ENCODE measurements at regions of chr14 and their contacts with region 1.

Region 1: DNA sequence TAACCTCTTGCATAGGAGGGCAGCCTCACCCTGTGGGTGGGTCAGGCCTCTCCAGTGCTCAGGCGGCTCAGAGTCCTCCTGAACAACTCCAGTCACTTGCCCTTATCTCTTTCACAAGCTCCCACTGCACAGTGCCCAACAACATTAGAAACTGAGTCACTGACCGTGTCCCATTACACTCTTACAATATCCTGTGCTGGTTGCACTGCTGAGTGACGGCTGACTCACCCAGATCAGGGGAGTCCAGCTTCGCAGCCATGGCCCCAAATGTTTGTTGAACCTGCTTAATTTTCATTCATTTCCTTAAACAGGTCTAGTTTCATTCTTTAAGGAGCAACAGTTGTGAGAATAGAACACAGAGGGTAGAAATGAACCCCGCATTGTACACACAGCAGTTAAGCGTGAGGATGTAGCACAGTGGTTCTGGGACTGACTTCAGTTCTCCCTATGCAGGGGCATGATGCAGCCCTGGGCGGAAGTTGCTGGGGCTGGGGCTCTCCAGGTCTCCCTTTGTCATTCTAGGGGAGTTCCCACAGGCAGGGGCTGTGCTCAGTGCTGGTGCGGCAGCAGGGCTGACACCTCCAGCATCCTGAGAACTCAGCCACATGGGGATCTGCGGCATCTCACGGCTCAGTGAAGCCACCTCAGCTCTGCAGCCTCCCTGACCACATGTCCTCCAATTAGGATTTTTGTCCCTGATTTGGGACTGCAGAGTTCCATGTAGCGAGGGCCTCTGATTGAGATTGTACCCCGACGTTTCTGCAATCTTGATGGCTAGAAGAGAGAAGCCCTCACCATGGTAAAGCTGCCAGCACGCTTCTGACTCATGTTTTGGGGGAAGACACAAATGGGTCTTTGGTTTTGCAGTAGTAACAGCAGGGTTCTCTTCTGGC is 16.1 kb downstream of the GPR68 start:
- DNase-seq: peak; percentile 78
- ATAC-seq: peak; percentile 83
- H3K4me3 Mint-ChIP-seq: peak overlapping the region; percentile 80
- H3K27ac Mint-ChIP-seq: peak overlapping the region; percentile 97
- H3K4me1 Mint-ChIP-seq: peaks cover 82% of the 10 kb centered on the region
- H3K27me3 Mint-ChIP-seq: no peaks in the 10 kb centered on the region

Region 2: DNA sequence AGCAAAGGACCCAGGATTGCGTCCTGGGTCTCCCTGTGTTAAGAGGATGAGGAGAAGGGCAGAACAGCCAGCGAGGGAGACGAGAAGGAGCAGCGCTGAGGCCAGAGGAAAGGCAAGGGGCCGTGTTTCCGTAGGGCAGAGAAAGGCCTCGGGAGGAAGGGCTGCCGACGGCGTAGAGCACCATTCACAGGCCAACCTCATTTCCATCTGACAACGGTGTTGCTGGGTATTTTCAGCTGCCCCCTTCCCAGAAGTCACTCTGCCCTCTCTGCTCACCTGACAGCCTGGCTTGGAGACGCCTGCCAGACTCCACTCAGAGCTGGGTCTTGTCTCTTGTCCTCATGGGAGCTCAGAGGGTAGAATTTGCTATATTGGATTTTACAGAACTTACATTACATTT is 35.3 kb before region 1 on chr14:
- POLR2A ChIA-PET with region 1: interaction called, 24 read pairs
- DNase-seq: no peak
- ATAC-seq: no peak
- H3K4me3 Mint-ChIP-seq: no peak overlapping the region
- H3K27ac Mint-ChIP-seq: no peak overlapping the region
- H3K4me1 Mint-ChIP-seq: peaks cover 36% of the 10 kb centered on the region
- H3K27me3 Mint-ChIP-seq: no peaks in the 10 kb centered on the region

Region 3: GRCh38 chr14:91202234-91202974 is 26.0 kb before region 1 on chr14:
- POLR2A ChIA-PET with region 1: interaction called, 13 read pairs
- DNase-seq: peak; percentile 75
- ATAC-seq: peak; percentile 20
- H3K4me3 Mint-ChIP-seq: peak overlapping the region; percentile 56
- H3K27ac Mint-ChIP-seq: peak overlapping the region; percentile 78
- H3K4me1 Mint-ChIP-seq: peaks cover 47% of the 10 kb centered on the region
- H3K27me3 Mint-ChIP-seq: no peaks in the 10 kb centered on the region

Region 4: DNA sequence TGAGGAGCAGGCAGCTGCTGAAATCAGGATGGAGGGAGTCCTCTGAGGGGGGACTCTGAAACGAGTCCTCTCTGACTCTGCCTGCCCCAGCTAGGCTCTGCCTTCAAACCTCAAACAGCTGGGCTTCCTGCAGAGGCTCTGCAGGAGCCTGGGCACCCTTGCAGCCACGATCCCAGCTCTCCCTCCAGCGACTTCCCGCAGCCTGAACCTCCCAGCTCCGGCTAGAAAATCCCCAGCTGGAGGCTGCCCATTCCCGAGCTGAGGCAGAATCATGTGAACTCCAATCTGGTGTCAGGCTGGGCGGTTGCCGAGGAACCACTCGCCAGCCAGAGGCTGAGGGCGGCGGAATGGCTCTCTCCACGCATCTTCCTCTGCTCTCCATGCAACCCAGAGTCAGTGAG is 16.1 kb after region 1 on chr14 and contains the start of gene GPR68:
- POLR2A ChIA-PET with region 1: interaction called, 220 read pairs
- DNase-seq: peak; percentile 64
- ATAC-seq: peak; percentile 13
- H3K4me3 Mint-ChIP-seq: peak within 1 kb of the TSS; percentile 88
- H3K27ac Mint-ChIP-seq: peak within 1 kb of the TSS; percentile 90
- H3K4me1 Mint-ChIP-seq: peaks cover 78% of the 10 kb centered on the region
- H3K27me3 Mint-ChIP-seq: no peaks in the 10 kb centered on the region
- total RNA-seq, gene GPR68: 23.0 to 28.0 TPM

Region 5: GRCh38 chr14:91249841-91250616 is 21.7 kb after region 1 on chr14:
- POLR2A ChIA-PET with region 1: interaction called, 220 read pairs
- DNase-seq: peak; percentile 78
- ATAC-seq: peak; percentile 34
- H3K4me3 Mint-ChIP-seq: peak overlapping the region; percentile 78
- H3K27ac Mint-ChIP-seq: peak overlapping the region; percentile 97
- H3K4me1 Mint-ChIP-seq: peaks cover 72% of the 10 kb centered on the region
- H3K27me3 Mint-ChIP-seq: no peaks in the 10 kb centered on the region

Region 6: DNA sequence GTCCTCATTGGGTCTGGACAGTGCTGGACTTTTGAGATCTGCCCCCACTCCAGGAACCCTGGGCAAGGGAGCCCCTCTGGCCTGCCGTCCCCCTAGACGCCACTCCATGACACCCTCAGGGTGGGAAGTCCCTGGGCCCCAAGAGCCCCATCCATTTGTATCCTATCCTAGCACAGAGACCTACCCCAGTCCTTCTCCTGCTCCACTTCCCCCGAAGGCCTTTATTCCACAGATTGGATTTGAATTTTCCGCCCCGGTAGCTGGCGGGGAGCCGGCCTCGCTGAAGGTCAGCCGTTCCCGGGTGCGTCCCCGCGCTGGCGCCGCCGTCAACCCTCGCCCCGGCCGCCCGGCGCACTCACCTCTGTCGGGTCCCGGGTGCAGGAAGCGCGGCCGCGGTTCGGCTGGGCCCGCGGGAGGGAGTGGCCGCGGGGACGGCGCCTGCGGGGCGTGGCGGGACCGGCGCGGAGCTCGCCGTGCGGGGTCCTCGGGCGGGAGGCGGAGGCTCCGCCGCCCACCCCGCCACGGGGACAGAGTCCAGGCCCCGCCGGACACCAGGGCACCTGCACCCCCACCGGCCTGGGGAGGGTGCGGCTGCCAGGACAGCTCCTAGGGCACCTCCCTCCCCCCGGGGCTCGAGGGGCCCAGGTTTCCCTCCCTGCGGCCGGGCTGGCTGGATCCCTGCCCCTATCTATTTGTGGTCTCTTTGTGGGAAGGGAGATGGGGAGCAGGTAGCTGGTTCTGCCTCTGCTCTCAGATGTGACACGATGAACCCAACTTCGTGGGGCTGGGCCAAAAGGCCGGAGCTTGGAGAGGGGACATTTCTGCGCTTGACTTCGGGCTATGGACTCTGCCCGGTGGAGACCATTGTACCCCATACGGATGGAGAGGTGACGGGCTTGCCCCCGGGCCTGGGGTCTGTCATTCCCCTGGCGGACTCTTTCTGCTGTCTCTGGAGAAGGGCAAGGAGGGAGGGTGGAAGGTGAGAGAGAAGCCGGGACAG is 36.1 kb after region 1 on chr14:
- POLR2A ChIA-PET with region 1: interaction called, 29 read pairs
- DNase-seq: peak; percentile 74
- ATAC-seq: peak; percentile 59
- H3K4me3 Mint-ChIP-seq: peak overlapping the region; percentile 80
- H3K27ac Mint-ChIP-seq: peak overlapping the region; percentile 70
- H3K4me1 Mint-ChIP-seq: peaks cover 51% of the 10 kb centered on the region
- H3K27me3 Mint-ChIP-seq: no peaks in the 10 kb centered on the region